ENCODE measurements at regions of chr22 and their contacts with region 1.

Region 1: GRCh38 chr22:25702040-25702439 is 39.9 kb upstream of the MYO18B start:
- DNase-seq: no peak

Region 2: DNA sequence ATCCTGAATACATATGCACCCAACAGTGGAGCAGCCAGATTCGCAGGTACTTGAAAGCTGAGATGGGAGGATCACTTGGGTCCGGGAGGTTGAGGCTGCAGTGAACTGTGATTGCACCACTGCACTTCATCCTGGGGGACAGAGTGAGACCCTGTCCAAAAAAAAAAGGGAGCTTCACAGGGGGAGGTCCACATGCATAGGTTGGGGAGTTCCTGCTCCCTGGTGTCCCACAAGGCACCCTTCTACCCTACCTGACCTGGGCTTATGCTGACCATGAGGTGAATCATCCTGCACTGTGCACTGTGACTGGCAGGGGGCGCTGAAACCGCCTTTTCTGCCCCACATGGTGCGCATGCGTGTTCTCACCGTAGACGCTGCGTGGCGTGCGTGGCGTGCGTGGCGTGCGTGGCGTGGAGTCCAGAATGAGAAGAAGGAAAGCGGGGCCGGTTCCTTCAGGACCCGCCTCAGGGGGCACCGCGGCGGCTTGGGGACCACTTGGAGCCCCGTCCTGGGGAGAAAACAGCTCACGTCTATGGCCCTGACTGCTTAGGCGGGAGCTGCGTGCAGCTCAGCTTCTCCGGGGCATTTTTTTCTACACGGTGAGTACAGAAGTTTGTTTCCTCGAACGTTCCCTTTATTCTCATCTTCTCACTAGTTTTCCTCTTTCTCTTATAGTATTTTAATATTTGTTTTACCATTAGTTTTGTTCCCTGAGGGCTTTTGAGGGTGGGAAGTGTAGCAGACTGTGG is 254.2 kb before region 1 on chr22:
- intact Hi-C with region 1: loop called (anchors 5 kb)
- DNase-seq: peak; percentile 78 to 98 (median 90)

Region 3: DNA sequence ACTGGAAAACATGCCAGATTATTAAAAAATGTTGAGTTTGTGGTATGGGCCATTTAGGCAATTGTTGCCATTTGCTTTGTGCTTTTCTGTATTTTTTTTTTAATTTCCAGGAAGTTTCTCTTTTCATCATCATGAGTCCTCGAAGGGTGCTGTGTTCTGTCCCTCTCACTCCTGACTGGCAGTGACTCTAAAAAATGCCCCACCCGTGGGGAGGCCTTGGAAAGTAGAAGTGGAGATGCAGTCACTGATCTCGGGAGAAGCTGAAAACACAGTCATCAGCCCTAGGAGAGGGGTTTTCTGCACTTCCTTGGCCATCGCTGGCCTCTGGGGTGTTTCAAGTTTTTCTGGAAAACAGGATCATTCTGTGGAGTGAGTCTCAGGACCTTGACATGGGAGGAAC is 236.1 kb before region 1 on chr22:
- intact Hi-C with region 1: loop called (anchors 1 kb)
- DNase-seq: no peak

Region 4: GRCh38 chr22:25564979-25565677 is 136.9 kb before region 1 on chr22:
- intact Hi-C with region 1: loop called (anchors 5 kb)
- DNase-seq: peak in 6 of 10 donors; percentile 11 to 81 (median 21)

Region 5: GRCh38 chr22:25759825-25760231 is 57.8 kb after region 1 on chr22:
- intact Hi-C with region 1: loop called (anchors 10 kb)
- DNase-seq: no peak

Measured in posterior cingulate gyrus (tissue), 11 donors.